ENCODE measurements at regions of chr15 and their contacts with region 1.

Region 1: GRCh38 chr15:57306161-57306943 is 70.0 kb upstream of the CGNL1 start:
- DNase-seq: peak; percentile 59 to 78 (median 68)
- H3K4me3 ChIP-seq: peak overlapping the region in 1 of 2 donors; percentile 18
- H3K4me3 Mint-ChIP-seq: peak overlapping the region in 7 of 8 donors; percentile 14 to 68 (median 62)
- H3K27ac ChIP-seq: no peak overlapping the region
- H3K27ac Mint-ChIP-seq: no peak overlapping the region
- H3K4me1 ChIP-seq: peaks cover 4% of the 10 kb centered on the region
- H3K4me1 Mint-ChIP-seq: peaks cover 0 to 7% (median 1%) of the 10 kb centered on the region in 4 donors
- H3K27me3 ChIP-seq: no peaks in the 10 kb centered on the region
- H3K27me3 Mint-ChIP-seq: no peaks in the 10 kb centered on the region

Region 2: GRCh38 chr15:56491110-56491722 is 815.1 kb before region 1 on chr15:
- CTCF ChIA-PET with region 1: interaction called, 85 read pairs
- POLR2A ChIA-PET with region 1: no interaction called
- intact Hi-C with region 1: loop called (anchors 1 kb)
- DNase-seq: peak in 4 of 5 donors; percentile 19 to 36 (median 27)
- H3K4me3 ChIP-seq: no peak overlapping the region
- H3K4me3 Mint-ChIP-seq: no peak overlapping the region
- H3K27ac ChIP-seq: no peak overlapping the region
- H3K27ac Mint-ChIP-seq: no peak overlapping the region
- H3K4me1 ChIP-seq: no peaks in the 10 kb centered on the region
- H3K4me1 Mint-ChIP-seq: no peaks in the 10 kb centered on the region
- H3K27me3 ChIP-seq: no peaks in the 10 kb centered on the region
- H3K27me3 Mint-ChIP-seq: peaks cover 2 to 4% of the 10 kb centered on the region in 2 donors

Region 3: DNA sequence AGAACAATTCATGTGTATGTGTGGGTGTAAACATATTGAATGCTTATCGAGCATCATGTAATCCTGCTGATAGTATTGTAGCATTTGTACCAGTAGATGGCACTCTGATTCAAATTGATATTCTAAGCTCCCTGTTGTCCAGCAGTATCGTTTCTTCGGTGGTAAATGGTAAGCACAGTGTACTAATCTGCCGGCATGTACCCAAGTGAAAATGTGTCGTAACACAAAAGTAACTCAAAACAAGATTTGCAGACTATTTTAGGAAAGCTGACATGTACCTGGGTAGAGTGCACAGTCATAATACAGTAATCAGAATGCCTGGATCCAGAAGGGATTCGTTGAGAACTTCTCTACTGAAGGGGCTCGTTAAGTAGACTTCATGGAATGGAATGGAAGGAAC is 809.7 kb before region 1 on chr15:
- CTCF ChIA-PET with region 1: interaction called, 85 read pairs
- POLR2A ChIA-PET with region 1: no interaction called
- intact Hi-C with region 1: loop called (anchors 1 kb)
- DNase-seq: peak in 4 of 5 donors; percentile 24 to 41 (median 32)
- H3K4me3 ChIP-seq: no peak overlapping the region
- H3K4me3 Mint-ChIP-seq: no peak overlapping the region
- H3K27ac ChIP-seq: no peak overlapping the region
- H3K27ac Mint-ChIP-seq: no peak overlapping the region
- H3K4me1 ChIP-seq: no peaks in the 10 kb centered on the region
- H3K4me1 Mint-ChIP-seq: peaks cover 3 to 4% (median 4%) of the 10 kb centered on the region in 4 donors
- H3K27me3 ChIP-seq: no peaks in the 10 kb centered on the region
- H3K27me3 Mint-ChIP-seq: peaks cover 9 to 16% of the 10 kb centered on the region in 2 donors

Region 4: GRCh38 chr15:56821721-56822425 is 484.5 kb before region 1 on chr15:
- CTCF ChIA-PET with region 1: interaction called, 19 read pairs
- POLR2A ChIA-PET with region 1: no interaction called
- intact Hi-C with region 1: no loop called
- DNase-seq: peak in 4 of 5 donors; percentile 29 to 46 (median 38)
- H3K4me3 ChIP-seq: no peak overlapping the region
- H3K4me3 Mint-ChIP-seq: no peak overlapping the region
- H3K27ac ChIP-seq: no peak overlapping the region
- H3K27ac Mint-ChIP-seq: peak overlapping the region in 1 of 7 donors; percentile 42
- H3K4me1 ChIP-seq: no peaks in the 10 kb centered on the region
- H3K4me1 Mint-ChIP-seq: no peaks in the 10 kb centered on the region
- H3K27me3 ChIP-seq: no peaks in the 10 kb centered on the region
- H3K27me3 Mint-ChIP-seq: no peaks in the 10 kb centered on the region

Region 5: DNA sequence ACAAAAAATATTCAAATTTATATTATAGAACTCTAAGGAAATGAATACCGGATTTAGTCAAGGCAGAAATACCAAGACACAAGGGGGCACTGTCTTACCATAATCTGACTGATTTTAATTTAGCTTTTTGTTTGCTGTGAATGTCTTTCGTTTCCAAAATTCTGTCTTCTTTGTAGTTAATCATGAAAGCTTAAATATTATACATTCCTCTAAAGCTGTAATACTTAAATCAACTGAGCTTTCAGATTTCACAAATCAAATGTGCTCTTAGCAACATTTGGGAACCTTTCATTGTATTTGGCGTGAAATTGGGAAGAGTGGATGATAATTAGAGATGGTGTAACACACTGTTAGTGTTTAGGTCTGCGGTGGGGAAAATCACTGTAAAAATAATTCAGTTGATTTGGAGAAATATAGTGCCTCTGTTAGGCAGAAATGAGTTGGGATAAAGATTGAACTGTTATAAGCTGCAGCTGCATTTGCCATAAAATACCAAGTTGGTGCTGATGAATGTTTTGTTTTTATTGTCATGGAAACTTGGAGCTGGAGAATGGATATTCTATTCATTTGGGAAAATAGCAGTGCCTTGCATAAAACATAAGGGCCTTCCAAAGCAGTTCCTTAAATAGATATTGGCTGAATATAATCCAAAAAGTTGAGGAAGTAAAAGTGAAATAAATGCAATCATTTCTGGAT is 159.7 kb before region 1 on chr15:
- CTCF ChIA-PET with region 1: interaction called, 47 read pairs
- POLR2A ChIA-PET with region 1: no interaction called
- intact Hi-C with region 1: loop called (anchors 1 kb)
- DNase-seq: peak in 2 of 5 donors; percentile 12 to 15
- H3K4me3 ChIP-seq: no peak overlapping the region
- H3K4me3 Mint-ChIP-seq: no peak overlapping the region
- H3K27ac ChIP-seq: no peak overlapping the region
- H3K27ac Mint-ChIP-seq: peak overlapping the region in 1 of 7 donors; percentile 19
- H3K4me1 ChIP-seq: no peaks in the 10 kb centered on the region
- H3K4me1 Mint-ChIP-seq: peaks cover 0 to 9% (median 5%) of the 10 kb centered on the region in 4 donors
- H3K27me3 ChIP-seq: no peaks in the 10 kb centered on the region
- H3K27me3 Mint-ChIP-seq: no peaks in the 10 kb centered on the region